ENCODE measurements at regions of chr3 and their contacts with region 1.

Region 1: GRCh38 chr3:42101048-42101447 is 9.9 kb downstream of the TRAK1 start:
- DNase-seq: no peak
- H3K4me3 ChIP-seq: no peak overlapping the region
- H3K27ac ChIP-seq: no peak overlapping the region
- H3K4me1 ChIP-seq: peaks cover 0 to 7% (median 3%) of the 10 kb centered on the region in 4 experiments; a peak in 3 of 7 replicates
- H3K27me3 ChIP-seq: no peaks in the 10 kb centered on the region
- CTCF ChIP-seq: no peak
- EP300 ChIP-seq: no peak
- POLR2A ChIP-seq: no peak
- RAD21 ChIP-seq: no peak

Region 2: DNA sequence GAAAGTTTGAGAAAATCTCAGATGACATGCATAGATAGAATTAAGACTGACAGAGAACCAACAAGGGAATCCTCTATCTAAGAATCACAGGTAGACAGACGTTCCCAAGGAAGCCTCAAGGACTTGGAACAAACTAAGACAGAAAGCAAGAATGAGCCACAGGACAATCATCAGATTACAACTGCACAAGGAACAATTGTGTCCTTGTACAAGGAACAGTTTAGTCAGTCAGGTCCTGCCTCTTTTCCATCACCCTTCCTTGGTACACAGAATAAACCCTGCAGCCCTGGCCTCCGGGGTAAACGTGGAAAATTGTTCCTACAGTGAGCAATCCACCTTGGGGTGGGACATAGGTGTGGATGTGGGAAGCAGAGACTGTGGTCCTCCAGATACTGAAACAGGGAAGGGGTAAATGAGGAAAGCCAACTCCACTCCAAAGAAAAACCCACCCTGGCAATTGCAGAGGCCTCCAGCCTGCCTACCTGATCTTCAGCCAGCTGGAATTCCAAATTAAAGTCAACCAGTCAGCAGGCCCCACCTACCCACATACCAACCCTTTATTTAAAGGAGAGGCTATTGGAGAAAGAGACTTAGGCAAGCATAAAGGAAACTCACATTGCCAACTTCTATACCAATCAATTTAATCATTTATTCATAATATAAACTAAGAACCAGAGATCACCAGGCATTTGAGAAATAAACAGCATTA is 212.5 kb before region 1 on chr3:
- CTCF ChIA-PET with region 1: interaction called, 10 read pairs
- POLR2A ChIA-PET with region 1: no interaction called
- DNase-seq: peak in 1 of 2 experiments; percentile 49
- H3K4me3 ChIP-seq: peak overlapping the region in 1 of 4 experiments; percentile 16; a peak in 1 of 8 replicates
- H3K27ac ChIP-seq: no peak overlapping the region
- H3K4me1 ChIP-seq: peaks cover 3 to 7% (median 4%) of the 10 kb centered on the region in 4 experiments; a peak in 6 of 7 replicates
- H3K27me3 ChIP-seq: no peaks in the 10 kb centered on the region
- CTCF ChIP-seq: no peak
- EP300 ChIP-seq: no peak
- POLR2A ChIP-seq: no peak
- RAD21 ChIP-seq: no peak

Region 3: GRCh38 chr3:41961750-41962679 is 139.0 kb before region 1 on chr3 and contains the start of gene ULK4:
- CTCF ChIA-PET with region 1: interaction called, 11 read pairs
- POLR2A ChIA-PET with region 1: no interaction called
- DNase-seq: peak; percentile 90 to 97
- H3K4me3 ChIP-seq: peak within 1 kb of the TSS; percentile 74 to 97 (median 78)
- H3K27ac ChIP-seq: 0 out of 2 replicates have a peak within 1 kb of the TSS, but pooled peaks have one; percentile 25
- H3K4me1 ChIP-seq: peaks cover 0 to 4% (median 0%) of the 10 kb centered on the region in 4 experiments; a peak in 2 of 7 replicates
- H3K27me3 ChIP-seq: no peaks in the 10 kb centered on the region
- CTCF ChIP-seq: no peak
- EP300 ChIP-seq: peak in 1 of 2 experiments; percentile 100; a peak in 2 of 3 replicates
- POLR2A ChIP-seq: no peak; a peak in 2 of 3 replicates
- RAD21 ChIP-seq: no peak
- total RNA-seq, gene ULK4: 8.8 and 10.8 TPM in 2 replicates

Region 4: DNA sequence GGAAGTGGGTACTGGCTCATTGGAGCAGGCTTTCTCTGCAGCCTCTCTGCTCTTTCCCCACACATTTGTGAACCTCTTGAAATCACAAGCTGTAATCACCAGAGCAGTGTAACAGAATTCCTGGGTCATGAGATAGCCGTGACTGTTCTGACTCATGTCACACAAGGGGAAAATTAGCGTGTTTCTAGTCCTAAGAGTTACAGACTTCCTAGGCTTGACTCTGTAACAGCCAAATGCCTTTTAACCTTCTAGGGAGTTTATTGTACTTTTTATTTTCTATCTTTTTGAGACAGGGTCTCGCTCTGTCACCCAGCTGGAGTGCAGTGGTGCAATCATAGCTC is 64.6 kb before region 1 on chr3:
- CTCF ChIA-PET with region 1: interaction called, 21 read pairs
- POLR2A ChIA-PET with region 1: no interaction called
- DNase-seq: no peak
- H3K4me3 ChIP-seq: no peak overlapping the region
- H3K27ac ChIP-seq: no peak overlapping the region
- H3K4me1 ChIP-seq: peaks cover 6 to 11% (median 8%) of the 10 kb centered on the region in 4 experiments
- H3K27me3 ChIP-seq: no peaks in the 10 kb centered on the region
- CTCF ChIP-seq: no peak
- EP300 ChIP-seq: no peak
- POLR2A ChIP-seq: no peak
- RAD21 ChIP-seq: no peak

Region 5: DNA sequence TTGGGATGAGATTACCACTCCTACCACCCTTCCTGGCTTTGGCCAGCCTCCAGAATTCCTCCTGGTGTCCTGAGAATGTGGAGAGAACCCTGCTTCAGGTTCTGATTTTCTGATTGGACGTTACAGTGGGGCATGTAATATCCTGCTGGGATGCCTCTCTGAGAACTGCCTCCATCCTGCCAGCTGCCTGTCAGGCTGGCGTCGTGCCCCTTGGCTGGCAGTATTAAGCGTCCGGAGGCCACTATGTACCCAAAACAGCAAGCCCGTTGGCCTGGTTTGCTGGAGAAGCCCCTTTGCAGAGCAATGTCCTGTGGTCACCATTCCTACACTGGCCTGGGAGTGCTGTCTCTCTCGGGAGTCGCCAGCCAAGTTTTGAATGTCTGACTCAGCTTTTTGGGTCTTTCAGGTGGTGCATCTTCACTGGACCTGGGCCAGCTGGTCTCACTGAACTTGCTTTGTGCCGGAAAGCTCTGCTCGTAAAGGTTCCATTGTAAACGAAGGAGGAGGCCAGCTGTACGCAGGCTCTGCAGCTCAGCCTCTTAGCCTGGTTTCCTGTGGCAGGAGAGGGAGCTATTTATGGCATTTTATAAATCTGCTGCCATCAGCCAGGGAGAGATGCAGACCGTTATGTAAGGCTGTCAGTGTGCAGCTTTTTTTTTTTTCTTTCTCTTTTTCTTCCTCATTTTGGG is 29.0 kb before region 1 on chr3:
- CTCF ChIA-PET with region 1: interaction called, 17 read pairs
- POLR2A ChIA-PET with region 1: no interaction called
- DNase-seq: no peak
- H3K4me3 ChIP-seq: no peak overlapping the region
- H3K27ac ChIP-seq: peak overlapping the region; percentile 2; the same call in 1 of the 2 replicates
- H3K4me1 ChIP-seq: peaks cover 0 to 13% (median 10%) of the 10 kb centered on the region in 4 experiments; a peak in 4 of 7 replicates
- H3K27me3 ChIP-seq: no peaks in the 10 kb centered on the region
- CTCF ChIP-seq: no peak
- EP300 ChIP-seq: no peak
- POLR2A ChIP-seq: no peak
- RAD21 ChIP-seq: 0 out of 4 replicates have a peak, but pooled peaks of 1 of the 2 experiments have one; percentile 4

Region 6: GRCh38 chr3:42190701-42191462 is 89.8 kb after region 1 on chr3:
- CTCF ChIA-PET with region 1: interaction called, 18 read pairs
- POLR2A ChIA-PET with region 1: no interaction called
- DNase-seq: peak in 1 of 2 experiments; percentile 89
- H3K4me3 ChIP-seq: no peak overlapping the region
- H3K27ac ChIP-seq: no peak overlapping the region
- H3K4me1 ChIP-seq: peaks cover 0 to 3% (median 0%) of the 10 kb centered on the region in 4 experiments; a peak in 3 of 7 replicates
- H3K27me3 ChIP-seq: no peaks in the 10 kb centered on the region
- CTCF ChIP-seq: peak; percentile 61 to 88 (median 85)
- EP300 ChIP-seq: no peak
- POLR2A ChIP-seq: no peak
- RAD21 ChIP-seq: peak; percentile 78 to 83